ENCODE measurements at regions of chr10 and their contacts with region 1.

Region 1: DNA sequence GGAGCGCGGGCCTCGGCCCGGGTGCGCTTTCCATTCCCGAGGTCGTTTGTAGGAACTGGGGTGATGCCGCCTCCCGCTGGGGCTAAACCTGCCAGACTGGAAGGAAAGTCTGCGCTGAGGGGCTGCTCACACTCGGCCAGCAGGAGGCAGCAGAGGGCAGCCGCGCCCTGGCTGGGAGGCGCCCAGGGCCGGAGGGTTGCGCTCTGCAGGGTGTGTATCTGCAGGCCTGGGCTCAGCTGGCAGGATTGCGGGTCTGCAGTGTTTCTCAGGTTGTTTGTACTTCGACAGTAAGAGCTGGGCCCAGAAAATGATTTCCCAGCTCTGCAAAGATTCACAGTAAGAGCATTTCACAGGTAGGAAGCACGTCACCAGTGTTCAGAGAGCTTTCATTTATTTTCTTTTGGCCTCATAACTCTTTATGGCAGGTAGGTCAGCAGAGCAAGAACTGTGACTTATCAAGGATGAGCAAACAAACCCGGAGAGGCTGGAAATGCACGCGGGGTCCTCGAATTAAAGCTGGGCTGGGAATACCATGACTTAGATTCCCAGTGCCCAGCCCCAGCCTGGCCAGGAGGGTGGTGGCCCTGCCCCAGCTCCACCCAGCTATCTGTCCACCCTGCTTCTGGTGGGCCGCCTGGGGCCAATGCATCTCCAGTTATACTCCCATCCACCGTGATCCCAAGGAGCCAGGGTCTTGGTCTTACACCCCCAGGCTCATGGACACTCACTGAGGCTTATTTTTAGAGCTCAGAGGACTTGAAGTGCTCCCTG is 15.2 kb upstream of the PPP2R2D start:
- DNase-seq: peak; percentile 76 to 89 (median 83)
- ATAC-seq: peak; percentile 99
- H3K4me3 ChIP-seq: no peak overlapping the region
- H3K4me1 ChIP-seq: no peaks in the 10 kb centered on the region
- CTCF ChIP-seq: peak; percentile 98

Region 2: DNA sequence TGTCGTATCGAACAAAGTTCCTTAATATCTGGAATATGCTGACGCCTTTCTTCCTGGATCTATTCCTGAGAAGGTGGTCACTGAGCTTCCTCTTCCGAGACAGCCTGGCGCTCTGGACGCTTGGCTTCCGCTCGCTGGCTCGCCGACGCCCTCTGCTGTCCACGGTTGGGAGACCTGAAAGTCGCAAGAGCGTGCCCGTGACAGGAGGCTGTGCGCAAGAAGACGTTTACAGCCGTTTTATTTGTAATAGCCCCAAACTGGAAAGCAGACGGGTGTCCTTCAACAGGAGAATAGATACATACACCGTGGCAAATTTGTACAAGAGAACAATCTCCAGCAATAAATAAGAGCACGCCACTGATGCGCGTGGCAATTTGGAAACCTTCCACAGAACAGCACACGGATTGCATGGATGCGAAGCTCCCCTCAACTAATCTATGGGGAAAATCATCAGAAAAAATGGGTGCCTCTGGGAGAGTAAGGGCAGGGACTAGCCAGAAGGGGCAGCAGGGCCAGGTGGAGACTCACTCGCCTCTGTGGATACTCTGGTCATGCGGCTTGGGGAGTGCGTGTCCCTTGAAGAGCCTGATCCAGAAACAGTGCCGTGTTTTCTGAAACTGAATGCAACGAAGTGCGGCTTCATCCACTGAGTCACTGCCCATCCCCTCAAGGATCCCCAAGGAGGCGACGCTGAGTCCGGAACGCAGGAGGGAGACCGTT is 137.7 kb after region 1 on chr10:
- intact Hi-C with region 1: loop called (anchors 2 to 5 kb)
- DNase-seq: peak; percentile 76 to 89 (median 89)
- ATAC-seq: peak; percentile 91
- H3K4me3 ChIP-seq: no peak overlapping the region
- H3K4me1 ChIP-seq: no peaks in the 10 kb centered on the region
- CTCF ChIP-seq: peak; percentile 78

Region 3: GRCh38 chr10:132142411-132143161 is 257.0 kb after region 1 on chr10:
- intact Hi-C with region 1: loop called in 1 of 2 experiments (anchors 10 kb)
- DNase-seq: peak; percentile 36 to 53 (median 41)
- ATAC-seq: peak; percentile 65
- H3K4me3 ChIP-seq: no peak overlapping the region
- H3K4me1 ChIP-seq: no peaks in the 10 kb centered on the region
- CTCF ChIP-seq: peak; percentile 87

Region 4: GRCh38 chr10:132319853-132320669 is 434.5 kb after region 1 on chr10:
- intact Hi-C with region 1: no loop called
- DNase-seq: no peak
- ATAC-seq: peak; percentile 71
- H3K4me3 ChIP-seq: no peak overlapping the region
- H3K4me1 ChIP-seq: no peaks in the 10 kb centered on the region
- CTCF ChIP-seq: no peak

Measured in mucosa of descending colon (tissue), 3 donors.